Activated CD8-positive, alpha-beta T cell treated with anti-CD3 and anti-CD28 coated beads, Interleukin-2, amount 10 ng/mL, durations not matched to agents 7 days and 5 days (primary cell): ENCODE measurements at regions of chr17 and their contacts with region 1.

Region 1: GRCh38 chr17:45317112-45317928 is 500 bp upstream of the MAP3K14 start:
- DNase-seq: peak; percentile 100
- ATAC-seq: peak; percentile 90
- H3K4me3 Mint-ChIP-seq: peak overlapping the region; percentile 83
- H3K27ac Mint-ChIP-seq: peak overlapping the region; percentile 93
- H3K4me1 Mint-ChIP-seq: peaks cover 73% of the 10 kb centered on the region
- H3K27me3 Mint-ChIP-seq: no peaks in the 10 kb centered on the region

Region 2: DNA sequence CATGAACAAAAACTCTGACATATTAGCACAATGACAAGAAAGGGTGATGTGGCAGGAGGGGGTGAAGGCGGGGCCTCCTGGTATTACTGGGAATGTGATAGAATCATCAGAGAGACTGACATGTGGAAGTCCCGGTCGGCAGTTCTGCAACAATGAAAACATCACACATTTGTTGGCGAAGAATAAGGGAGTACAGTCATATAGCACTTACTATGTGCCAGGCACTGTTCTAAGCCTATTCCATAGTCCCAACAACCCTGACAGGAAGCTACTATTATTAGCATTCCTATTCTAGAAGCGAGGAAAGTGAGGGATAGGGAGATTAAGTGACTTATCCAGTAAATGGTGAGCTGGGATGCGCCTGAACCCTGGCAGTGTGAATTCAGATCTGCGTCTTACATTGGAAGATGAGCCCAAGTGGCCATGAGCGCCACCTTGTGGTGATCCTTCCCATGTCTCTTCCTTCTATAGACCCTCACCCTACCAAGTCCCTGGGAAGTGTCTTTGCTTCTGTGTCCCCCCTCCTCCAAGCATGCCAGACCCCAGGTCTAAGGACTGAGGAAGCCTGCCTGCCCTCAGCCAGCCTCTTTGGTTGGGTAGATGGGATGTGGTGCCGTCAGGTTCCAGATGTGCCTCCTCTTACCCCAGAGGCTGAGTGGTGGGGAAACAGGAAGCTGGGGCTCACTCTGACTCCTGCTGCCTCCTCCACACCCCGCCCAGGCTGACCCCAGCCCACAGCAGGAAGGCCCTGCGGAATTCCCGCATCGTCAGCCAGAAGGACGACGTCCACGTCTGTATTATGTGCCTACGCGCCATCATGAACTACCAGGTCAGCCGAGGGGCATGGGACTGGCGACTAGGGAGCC is 81.7 kb before region 1 on chr17:
- CTCF ChIA-PET with region 1: interaction called, 12 read pairs
- POLR2A ChIA-PET with region 1: no interaction called
- DNase-seq: peak; percentile 86
- ATAC-seq: peak; percentile 68
- H3K4me3 Mint-ChIP-seq: no peak overlapping the region
- H3K27ac Mint-ChIP-seq: peak overlapping the region; percentile 60
- H3K4me1 Mint-ChIP-seq: peaks cover 62% of the 10 kb centered on the region
- H3K27me3 Mint-ChIP-seq: no peaks in the 10 kb centered on the region

Region 3: DNA sequence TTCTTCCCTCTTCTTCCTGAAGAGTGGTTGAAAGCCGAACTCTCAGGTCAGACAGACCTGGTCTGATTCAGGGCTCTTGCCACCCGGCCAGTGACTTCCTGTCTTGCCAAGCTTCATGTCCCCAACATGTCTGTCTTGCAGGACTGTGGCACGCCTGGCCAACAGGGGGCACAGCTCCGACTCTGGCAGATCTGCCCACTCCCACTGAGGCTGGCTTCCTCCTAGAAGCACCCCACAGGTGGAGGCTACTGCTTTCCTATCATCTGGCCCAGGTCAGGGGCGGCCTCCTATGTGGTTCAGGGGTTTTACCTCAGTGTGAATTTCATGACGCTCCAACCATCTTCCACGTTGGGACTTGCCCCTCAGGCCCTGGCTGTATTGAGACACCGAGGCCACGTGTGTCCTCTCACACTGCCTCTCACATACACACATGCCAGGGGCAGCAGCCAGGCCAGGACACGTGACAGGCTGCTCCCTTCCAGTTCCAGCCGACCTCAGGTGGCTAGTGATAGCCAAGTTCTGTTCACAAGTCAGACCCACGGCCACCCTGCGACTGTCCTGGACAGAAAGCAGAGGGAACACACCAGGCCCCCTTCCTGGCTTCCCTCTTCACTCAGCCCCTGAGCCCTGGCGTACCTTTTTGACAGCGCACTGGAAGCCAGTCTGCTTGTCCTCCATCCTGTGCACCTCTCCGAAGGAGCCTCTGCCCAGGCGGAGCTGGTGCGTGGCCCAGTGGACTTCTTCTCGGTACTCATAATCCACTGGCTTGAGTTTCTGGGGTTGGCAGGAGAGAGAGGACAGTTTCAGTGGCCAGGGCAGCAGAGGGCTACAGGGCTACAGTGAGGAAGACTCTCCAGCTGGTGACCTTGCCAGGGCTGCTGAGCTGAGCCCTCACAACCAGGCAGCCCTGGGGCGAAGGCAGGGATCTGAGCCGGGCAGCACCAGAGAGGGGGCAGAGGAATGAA is 32.9 kb before region 1 on chr17:
- CTCF ChIA-PET with region 1: interaction called, 73 read pairs
- POLR2A ChIA-PET with region 1: interaction called, 4 read pairs
- DNase-seq: peak; percentile 42
- ATAC-seq: peak; percentile 53
- H3K4me3 Mint-ChIP-seq: no peak overlapping the region
- H3K27ac Mint-ChIP-seq: peak overlapping the region; percentile 77
- H3K4me1 Mint-ChIP-seq: peaks cover 26% of the 10 kb centered on the region
- H3K27me3 Mint-ChIP-seq: no peaks in the 10 kb centered on the region

Region 4: DNA sequence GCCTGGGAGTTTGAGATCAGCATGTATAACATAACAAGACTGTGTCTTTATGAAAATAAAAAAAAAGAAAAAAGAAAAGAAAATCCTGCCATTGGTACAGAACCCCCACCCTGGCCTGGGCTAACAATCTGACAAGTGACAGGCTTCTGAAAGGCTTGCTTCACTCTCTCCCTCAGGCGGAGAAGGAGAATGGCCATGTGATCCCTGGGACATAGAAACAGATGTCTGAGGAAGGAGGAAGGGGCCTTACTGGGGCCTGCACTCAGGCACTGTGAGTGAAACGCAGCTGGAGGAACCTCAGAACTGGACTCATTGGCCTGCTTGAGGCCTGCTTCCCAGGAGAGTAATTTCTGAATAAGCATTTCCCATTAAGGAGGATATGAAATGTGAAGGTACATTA is 18.0 kb before region 1 on chr17:
- CTCF ChIA-PET with region 1: interaction called, 25 read pairs
- POLR2A ChIA-PET with region 1: interaction called, 26 read pairs
- DNase-seq: no peak
- ATAC-seq: no peak
- H3K4me3 Mint-ChIP-seq: no peak overlapping the region
- H3K27ac Mint-ChIP-seq: peak overlapping the region; percentile 77
- H3K4me1 Mint-ChIP-seq: peaks cover 86% of the 10 kb centered on the region
- H3K27me3 Mint-ChIP-seq: no peaks in the 10 kb centered on the region

Region 5: GRCh38 chr17:45440155-45440778 is 122.9 kb after region 1 on chr17:
- CTCF ChIA-PET with region 1: no interaction called
- POLR2A ChIA-PET with region 1: no interaction called
- DNase-seq: no peak
- ATAC-seq: no peak
- H3K4me3 Mint-ChIP-seq: no peak overlapping the region
- H3K27ac Mint-ChIP-seq: peak overlapping the region; percentile 78
- H3K4me1 Mint-ChIP-seq: peaks cover 33% of the 10 kb centered on the region
- H3K27me3 Mint-ChIP-seq: no peaks in the 10 kb centered on the region